ENCODE measurements at regions of chr20 and their contacts with region 1.

Region 1: DNA sequence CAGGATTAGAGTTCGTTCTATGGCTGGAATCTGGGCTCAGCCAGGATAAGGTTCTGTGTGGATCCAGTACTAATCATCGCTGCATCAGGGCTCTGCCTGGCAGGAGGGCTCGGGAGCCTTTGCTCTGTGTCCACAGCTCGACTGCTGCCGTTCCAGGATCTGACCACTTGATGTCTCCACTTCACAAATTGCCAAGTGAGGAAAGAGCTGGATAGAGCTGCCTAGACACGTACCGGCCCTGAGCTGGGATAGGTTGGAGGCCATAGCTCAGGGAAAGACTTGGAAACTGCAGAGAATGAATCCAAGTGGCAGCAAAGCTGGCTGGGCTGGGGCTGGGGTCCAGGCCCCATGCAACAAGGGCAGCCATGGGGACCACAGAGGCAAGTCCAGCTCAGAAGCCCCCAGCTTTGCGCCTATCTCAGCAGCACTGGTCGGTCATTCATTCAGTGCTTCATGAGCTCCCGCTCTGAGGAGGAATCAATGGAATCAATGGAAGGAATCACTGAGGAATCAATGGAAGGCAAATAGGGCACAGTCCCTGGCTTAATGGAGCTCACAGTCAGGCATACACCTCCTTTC is 38.0 kb upstream of the TOP1 start:
- DNase-seq: peak; percentile 70 to 79
- H3K4me3 ChIP-seq: no peak overlapping the region
- H3K27ac ChIP-seq: no peak overlapping the region
- H3K4me1 ChIP-seq: peaks cover 0 to 3% (median 1%) of the 10 kb centered on the region in 4 experiments; a peak in 4 of 7 replicates
- H3K27me3 ChIP-seq: no peaks in the 10 kb centered on the region
- CTCF ChIP-seq: peak; percentile 75 to 93 (median 86)
- EP300 ChIP-seq: no peak
- POLR2A ChIP-seq: no peak
- RAD21 ChIP-seq: peak; percentile 85 to 92

Region 2: DNA sequence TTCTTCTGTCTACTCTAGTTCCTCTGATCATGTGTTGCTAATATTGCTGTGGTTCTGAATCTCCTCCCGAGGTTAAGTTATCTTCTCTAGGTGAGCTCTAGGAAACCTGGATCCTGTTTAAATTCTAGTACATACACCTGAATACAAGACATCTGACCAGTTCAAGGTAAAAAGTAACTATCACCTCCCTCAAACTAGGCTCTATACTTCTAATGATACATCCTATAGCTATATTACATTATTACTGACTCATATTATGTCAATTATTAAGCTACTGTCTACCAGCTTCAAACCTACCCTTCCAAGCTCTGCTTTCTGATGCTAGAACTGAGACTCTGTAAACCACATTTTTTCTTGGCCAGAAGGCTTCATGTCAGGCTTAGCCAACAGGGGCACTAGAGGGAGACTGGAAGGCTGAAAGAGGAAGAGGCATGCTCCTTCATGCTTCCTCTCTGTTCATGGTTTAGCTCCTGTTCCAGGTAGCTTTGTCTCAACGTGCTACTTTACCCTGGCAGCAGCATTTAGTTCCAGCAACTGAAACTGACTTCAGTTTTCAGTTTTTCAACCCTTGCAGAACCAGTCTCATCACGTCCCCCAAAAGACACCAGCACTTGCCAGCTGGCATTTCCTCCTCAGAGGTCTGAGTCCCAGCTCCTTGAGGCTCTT is 110.4 kb before region 1 on chr20:
- CTCF ChIA-PET with region 1: no interaction called
- POLR2A ChIA-PET with region 1: no interaction called
- DNase-seq: no peak
- H3K4me3 ChIP-seq: no peak overlapping the region
- H3K27ac ChIP-seq: no peak overlapping the region
- H3K4me1 ChIP-seq: 0 out of 7 replicates have a peak, but pooled peaks cover 0 to 3% (median 0%) of the 10 kb centered on the region in 4 experiments
- H3K27me3 ChIP-seq: no peaks in the 10 kb centered on the region
- CTCF ChIP-seq: peak in 1 of 3 experiments; percentile 35; a peak in 1 of 4 replicates
- EP300 ChIP-seq: no peak
- POLR2A ChIP-seq: no peak
- RAD21 ChIP-seq: no peak

Region 3: DNA sequence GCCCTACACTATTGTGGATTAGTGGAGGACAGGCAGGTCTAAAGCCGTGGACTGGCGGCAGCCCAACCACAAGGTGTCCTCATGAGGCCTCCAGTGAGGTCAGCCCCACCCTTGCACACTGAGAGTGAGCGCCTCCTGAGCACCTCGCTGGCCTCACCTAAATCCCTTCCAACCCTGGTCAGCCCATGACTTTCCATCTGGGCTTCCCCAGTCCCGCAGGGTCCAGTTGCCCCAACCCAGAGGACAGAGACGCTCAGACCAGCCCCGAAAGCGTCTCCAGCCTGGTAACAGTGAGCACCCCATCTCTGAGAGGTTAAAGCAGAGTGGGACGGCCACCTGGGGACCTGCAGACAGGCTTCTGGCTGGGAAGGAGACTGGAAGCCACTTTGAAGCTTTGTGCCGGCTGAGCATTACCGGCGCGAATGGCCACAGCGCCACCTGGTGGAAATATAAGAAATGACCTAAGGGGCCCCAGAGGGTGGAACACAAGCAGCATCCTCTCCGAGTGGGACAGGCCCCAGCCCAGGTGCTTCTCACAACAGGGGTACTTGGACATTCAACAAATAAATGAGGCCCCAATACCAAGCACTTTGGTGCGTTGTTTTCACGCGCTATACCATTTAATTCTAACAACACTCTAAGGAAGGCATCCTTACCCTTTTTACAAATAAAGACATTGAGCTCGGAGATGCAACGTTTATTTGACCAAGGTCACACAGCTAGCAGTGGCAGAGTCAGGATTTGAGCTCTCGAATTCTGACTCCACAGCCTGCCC is 27.7 kb before region 1 on chr20:
- CTCF ChIA-PET with region 1: interaction called, 31 read pairs
- POLR2A ChIA-PET with region 1: no interaction called
- DNase-seq: peak; percentile 33 to 91
- H3K4me3 ChIP-seq: no peak overlapping the region
- H3K27ac ChIP-seq: no peak overlapping the region
- H3K4me1 ChIP-seq: no peaks in the 10 kb centered on the region; a peak in 1 of 7 replicates
- H3K27me3 ChIP-seq: no peaks in the 10 kb centered on the region
- CTCF ChIP-seq: peak; percentile 77 to 86 (median 78)
- EP300 ChIP-seq: no peak
- POLR2A ChIP-seq: no peak
- RAD21 ChIP-seq: peak; percentile 92 to 96

Region 4: DNA sequence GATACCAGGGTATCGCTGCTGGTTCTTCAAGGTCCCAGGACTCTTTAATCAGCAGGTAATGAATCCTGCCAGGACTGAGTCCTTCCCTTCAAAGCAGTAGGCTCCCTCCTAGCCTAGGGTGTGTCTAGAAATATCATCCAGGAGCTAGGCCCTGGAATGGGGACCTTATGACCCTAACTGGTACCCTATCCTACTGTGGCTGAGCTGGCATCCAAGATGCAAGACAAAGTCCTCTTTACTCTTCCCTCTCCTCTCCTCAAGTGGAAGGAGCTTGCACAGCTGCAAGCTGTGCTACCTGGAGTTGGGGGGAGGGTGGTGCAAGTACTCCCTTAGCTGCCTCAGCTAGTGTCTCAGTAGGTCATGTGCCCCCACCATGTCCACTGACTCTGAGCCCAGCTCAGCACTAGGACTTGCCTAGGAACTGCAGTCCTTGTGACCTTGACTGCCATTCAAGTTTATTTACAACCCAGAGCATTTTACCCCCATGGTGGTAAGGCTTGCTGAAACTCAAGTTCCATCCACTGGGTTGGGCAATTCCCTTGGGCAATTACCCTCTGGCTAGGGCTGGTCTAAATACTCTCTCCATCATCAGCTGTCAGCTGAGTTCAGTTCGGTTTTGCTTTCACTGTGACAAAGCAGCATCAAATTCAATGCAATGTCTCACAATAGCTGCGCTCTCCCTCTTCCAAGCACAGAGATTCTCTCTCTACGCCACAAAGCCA is 10.4 kb before region 1 on chr20:
- CTCF ChIA-PET with region 1: interaction called, 19 read pairs
- POLR2A ChIA-PET with region 1: no interaction called
- DNase-seq: peak in 1 of 2 experiments; percentile 16
- H3K4me3 ChIP-seq: no peak overlapping the region
- H3K27ac ChIP-seq: no peak overlapping the region
- H3K4me1 ChIP-seq: no peaks in the 10 kb centered on the region; a peak in 1 of 7 replicates
- H3K27me3 ChIP-seq: no peaks in the 10 kb centered on the region
- CTCF ChIP-seq: no peak
- EP300 ChIP-seq: no peak
- POLR2A ChIP-seq: no peak
- RAD21 ChIP-seq: no peak

Region 5: GRCh38 chr20:41017390-41018042 is 26.9 kb after region 1 on chr20:
- CTCF ChIA-PET with region 1: interaction called, 11 read pairs
- POLR2A ChIA-PET with region 1: no interaction called
- DNase-seq: no peak
- H3K4me3 ChIP-seq: no peak overlapping the region
- H3K27ac ChIP-seq: no peak overlapping the region
- H3K4me1 ChIP-seq: 0 out of 7 replicates have a peak, but pooled peaks cover 0 to 2% (median 0%) of the 10 kb centered on the region in 4 experiments
- H3K27me3 ChIP-seq: no peaks in the 10 kb centered on the region
- CTCF ChIP-seq: no peak
- EP300 ChIP-seq: no peak
- POLR2A ChIP-seq: no peak
- RAD21 ChIP-seq: no peak

Region 6: DNA sequence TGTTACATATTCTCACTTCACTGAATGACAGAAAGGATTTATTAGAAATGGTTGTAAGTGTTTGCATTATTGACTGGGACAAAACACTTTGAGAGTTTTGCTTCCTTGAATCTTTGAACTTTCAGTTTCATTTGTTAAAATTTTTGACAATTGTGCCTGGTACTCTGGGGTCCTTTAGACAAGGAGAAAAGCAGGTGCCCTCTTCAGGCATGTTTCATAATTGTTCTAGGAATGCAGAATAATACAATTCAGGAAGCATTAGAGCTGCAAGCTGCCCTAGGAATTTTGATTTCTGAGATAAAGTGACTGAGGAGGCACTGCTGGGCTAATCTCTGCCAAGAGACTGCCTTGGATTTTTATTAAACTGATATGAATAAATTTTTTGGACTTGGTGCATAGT is 87.7 kb after region 1 on chr20:
- CTCF ChIA-PET with region 1: interaction called, 48 read pairs
- POLR2A ChIA-PET with region 1: no interaction called
- DNase-seq: no peak
- H3K4me3 ChIP-seq: no peak overlapping the region
- H3K27ac ChIP-seq: no peak overlapping the region
- H3K4me1 ChIP-seq: no peaks in the 10 kb centered on the region
- H3K27me3 ChIP-seq: no peaks in the 10 kb centered on the region
- CTCF ChIP-seq: peak in 2 of 3 experiments; percentile 17 to 35; a peak in 2 of 4 replicates
- EP300 ChIP-seq: no peak
- POLR2A ChIP-seq: no peak
- RAD21 ChIP-seq: peak; percentile 29 to 42; a peak in 3 of 4 replicates

Region 7: GRCh38 chr20:41095110-41095969 is 104.7 kb after region 1 on chr20:
- CTCF ChIA-PET with region 1: interaction called, 55 read pairs
- POLR2A ChIA-PET with region 1: no interaction called
- DNase-seq: no peak
- H3K4me3 ChIP-seq: no peak overlapping the region
- H3K27ac ChIP-seq: no peak overlapping the region
- H3K4me1 ChIP-seq: no peaks in the 10 kb centered on the region
- H3K27me3 ChIP-seq: no peaks in the 10 kb centered on the region
- CTCF ChIP-seq: peak; percentile 56 to 82 (median 67)
- EP300 ChIP-seq: no peak
- POLR2A ChIP-seq: no peak
- RAD21 ChIP-seq: peak; percentile 72 to 74

Measured in H1 (cell line).